ENCODE measurements at regions of chr13 and their contacts with region 1.

Region 1: DNA sequence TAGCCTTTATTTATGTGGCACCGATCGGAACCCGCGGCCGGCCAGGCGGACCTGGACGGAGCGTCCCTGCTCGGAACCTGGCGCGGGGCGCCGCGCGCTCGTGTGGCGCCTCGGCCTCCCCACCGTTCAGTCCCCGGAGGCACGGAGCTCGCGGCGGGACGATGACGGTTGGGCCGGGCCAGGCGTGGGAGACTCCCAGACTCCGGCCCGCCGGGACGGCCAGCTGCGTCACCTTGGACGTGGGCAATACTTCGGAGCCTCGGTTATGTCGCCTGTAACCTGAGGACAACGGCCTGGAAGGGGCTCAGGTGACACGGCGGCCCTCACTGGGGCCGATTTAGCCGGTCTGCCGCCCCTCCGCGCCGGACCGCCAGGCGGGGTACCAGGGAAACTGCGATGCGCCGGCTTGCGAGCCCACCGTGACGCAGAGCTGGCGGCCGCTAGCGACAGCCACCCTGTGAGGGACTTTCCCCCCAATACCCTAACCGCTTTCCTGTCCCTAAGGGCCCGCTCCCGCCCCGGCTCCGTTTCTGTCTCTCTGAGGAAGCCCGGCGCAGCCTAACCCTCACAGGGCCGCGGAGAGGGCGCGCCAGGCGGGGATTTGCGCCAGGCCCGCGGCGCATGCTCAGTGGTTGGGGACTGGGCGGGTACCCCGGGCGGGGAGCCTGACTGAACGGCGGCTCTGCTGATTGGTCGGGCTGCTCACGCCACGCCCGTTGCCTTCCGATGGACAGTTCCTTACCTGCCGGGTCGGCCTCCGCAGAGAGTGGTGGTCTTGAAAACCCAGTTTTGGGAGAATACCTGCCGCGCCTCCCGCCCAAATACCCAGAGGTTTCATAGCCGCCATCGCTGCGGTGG is 109.5 kb upstream of the DOCK9 start:
- DNase-seq: peak; percentile 83 to 95 (median 92)
- ATAC-seq: peak; percentile 85
- H3K4me3 ChIP-seq: peak overlapping the region; percentile 97
- H3K4me3 Mint-ChIP-seq: peak overlapping the region; percentile 92 to 100 (median 98)
- H3K27ac ChIP-seq: peak overlapping the region; percentile 95
- H3K27ac Mint-ChIP-seq: peak overlapping the region; percentile 96 to 99 (median 98)
- H3K4me1 ChIP-seq: peaks cover 29 to 31% of the 10 kb centered on the region in 2 donors
- H3K4me1 Mint-ChIP-seq: peaks cover 26 to 53% (median 42%) of the 10 kb centered on the region in 7 donors
- H3K27me3 ChIP-seq: no peaks in the 10 kb centered on the region
- H3K27me3 Mint-ChIP-seq: peaks cover 0 to 5% (median 3%) of the 10 kb centered on the region in 5 donors

Region 2: DNA sequence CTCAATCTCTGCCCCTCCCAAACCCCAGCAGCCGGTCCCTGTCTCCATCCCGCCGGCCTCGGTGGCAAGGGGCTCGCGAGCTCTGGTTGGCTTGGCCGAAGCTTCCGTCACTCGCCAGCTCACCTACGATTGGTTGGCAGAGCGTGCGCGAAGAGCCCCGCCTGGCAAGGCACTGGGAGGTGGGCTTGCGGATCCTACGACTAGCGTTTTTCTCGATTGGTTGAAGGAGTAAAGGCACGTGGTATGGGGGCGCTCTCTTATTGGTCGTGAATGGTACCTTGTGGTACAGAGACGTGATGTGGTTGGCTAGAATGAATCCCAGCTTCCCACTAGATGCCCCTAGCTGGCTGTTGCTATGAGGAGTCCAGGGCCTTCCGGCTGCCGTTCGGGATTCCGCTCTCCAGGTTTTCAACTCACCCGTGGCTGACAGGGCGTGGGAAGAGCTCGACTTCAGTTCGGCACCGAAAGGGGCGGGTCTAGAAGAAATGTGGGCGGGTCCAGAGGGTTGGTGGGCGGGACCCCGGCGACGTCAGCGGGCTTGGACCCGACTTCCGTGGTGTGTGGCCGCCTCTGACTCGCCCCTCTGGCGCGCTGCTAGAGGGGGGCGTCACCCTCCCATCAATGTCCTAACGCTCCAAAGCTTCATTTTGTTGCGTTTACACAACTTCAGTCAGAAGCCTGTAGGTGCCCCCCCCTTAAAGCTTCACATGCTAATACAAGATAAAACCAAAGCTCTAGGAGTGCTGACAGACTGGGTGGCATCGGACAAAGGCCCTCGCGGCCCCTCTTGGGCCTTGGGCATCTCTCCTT is 1654.2 kb before region 1 on chr13:
- CTCF ChIA-PET with region 1: no interaction called
- POLR2A ChIA-PET with region 1: no interaction called
- intact Hi-C with region 1: loop called (anchors 2 to 10 kb)
- DNase-seq: peak; percentile 97 to 99 (median 99)
- ATAC-seq: peak; percentile 85
- H3K4me3 ChIP-seq: peak overlapping the region; percentile 93
- H3K4me3 Mint-ChIP-seq: peak overlapping the region; percentile 90 to 99 (median 96)
- H3K27ac ChIP-seq: peak overlapping the region; percentile 100
- H3K27ac Mint-ChIP-seq: peak overlapping the region; percentile 98 to 100 (median 100)
- H3K4me1 ChIP-seq: peaks cover 0 to 8% of the 10 kb centered on the region in 2 donors
- H3K4me1 Mint-ChIP-seq: peaks cover 13 to 36% (median 30%) of the 10 kb centered on the region in 7 donors
- H3K27me3 ChIP-seq: no peaks in the 10 kb centered on the region
- H3K27me3 Mint-ChIP-seq: peaks cover 0 to 11% (median 7%) of the 10 kb centered on the region in 5 donors

Region 3: DNA sequence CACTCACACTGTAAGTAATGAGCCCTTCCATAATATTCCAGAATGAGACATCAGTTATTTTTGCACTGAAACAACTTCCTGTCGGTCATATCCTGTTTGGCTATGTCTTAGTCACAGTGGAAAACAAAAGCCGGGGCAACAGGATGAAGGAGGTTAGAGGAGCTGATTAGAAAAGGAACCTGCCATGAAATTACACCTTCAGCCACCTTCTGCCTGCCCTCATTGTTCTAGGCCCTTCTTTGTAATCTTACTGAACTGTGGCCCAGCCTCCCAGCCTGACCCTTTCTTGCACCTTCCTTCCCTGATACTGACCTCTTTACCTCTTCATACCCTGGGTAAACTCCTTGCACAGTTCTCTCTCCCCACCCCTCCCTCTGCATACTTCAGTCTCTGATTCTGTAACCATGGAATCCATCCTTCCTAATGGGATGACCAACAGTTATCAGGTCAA is 176.8 kb before region 1 on chr13:
- CTCF ChIA-PET with region 1: no interaction called
- POLR2A ChIA-PET with region 1: interaction called, 4 read pairs
- intact Hi-C with region 1: loop called (anchors 2 to 5 kb)
- DNase-seq: peak in 8 of 9 donors; percentile 13 to 59 (median 50)
- ATAC-seq: peak; percentile 71
- H3K4me3 ChIP-seq: no peak overlapping the region
- H3K4me3 Mint-ChIP-seq: peak overlapping the region in 9 of 10 donors; percentile 5 to 82 (median 69)
- H3K27ac ChIP-seq: no peak overlapping the region
- H3K27ac Mint-ChIP-seq: peak overlapping the region; percentile 75 to 96 (median 90)
- H3K4me1 ChIP-seq: peaks cover 9 to 10% of the 10 kb centered on the region in 2 donors
- H3K4me1 Mint-ChIP-seq: peaks cover 12 to 53% (median 47%) of the 10 kb centered on the region in 7 donors
- H3K27me3 ChIP-seq: no peaks in the 10 kb centered on the region
- H3K27me3 Mint-ChIP-seq: no peaks in the 10 kb centered on the region

Region 4: GRCh38 chr13:99057310-99057975 is 29.9 kb before region 1 on chr13:
- CTCF ChIA-PET with region 1: interaction called, 4 read pairs
- POLR2A ChIA-PET with region 1: interaction called, 77 read pairs
- intact Hi-C with region 1: no loop called
- DNase-seq: no peak
- ATAC-seq: no peak
- H3K4me3 ChIP-seq: no peak overlapping the region
- H3K4me3 Mint-ChIP-seq: peak overlapping the region in 2 of 10 donors; percentile 8 to 50
- H3K27ac ChIP-seq: no peak overlapping the region
- H3K27ac Mint-ChIP-seq: peak overlapping the region in 8 of 9 donors; percentile 7 to 96 (median 74)
- H3K4me1 ChIP-seq: peaks cover 28 to 78% of the 10 kb centered on the region in 2 donors
- H3K4me1 Mint-ChIP-seq: peaks cover 46 to 99% (median 94%) of the 10 kb centered on the region in 7 donors
- H3K27me3 ChIP-seq: no peaks in the 10 kb centered on the region
- H3K27me3 Mint-ChIP-seq: peaks cover 0 to 19% (median 0%) of the 10 kb centered on the region in 5 donors

Region 5: DNA sequence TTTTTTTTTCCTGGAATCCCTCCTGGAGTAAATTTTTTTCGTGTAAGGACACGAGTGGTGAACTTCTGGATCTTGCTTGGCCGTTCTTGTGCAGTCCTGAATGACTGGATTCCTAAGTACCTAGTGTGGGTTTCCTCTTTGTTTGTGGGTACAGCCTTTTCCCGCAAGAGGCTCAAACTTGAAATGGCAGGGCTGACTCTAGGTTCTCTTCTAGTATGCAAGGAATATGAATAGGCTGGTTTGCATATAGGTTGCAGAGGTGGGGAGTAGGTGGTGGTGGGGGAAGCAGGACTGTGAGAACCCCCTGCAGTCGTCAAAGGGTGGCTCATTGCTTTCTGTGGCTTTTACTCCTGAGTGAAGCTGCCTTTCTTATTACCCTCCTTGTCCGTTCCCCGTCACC is 126.9 kb after region 1 on chr13:
- CTCF ChIA-PET with region 1: no interaction called
- POLR2A ChIA-PET with region 1: interaction called, 4 read pairs
- intact Hi-C with region 1: loop called (anchors 2 to 5 kb)
- DNase-seq: peak in 4 of 9 donors; percentile 34 to 53 (median 46)
- ATAC-seq: no peak
- H3K4me3 ChIP-seq: peak overlapping the region; percentile 53
- H3K4me3 Mint-ChIP-seq: peak overlapping the region; percentile 69 to 95 (median 92)
- H3K27ac ChIP-seq: peak overlapping the region; percentile 85
- H3K27ac Mint-ChIP-seq: peak overlapping the region; percentile 94 to 100 (median 99)
- H3K4me1 ChIP-seq: peaks cover 46 to 67% of the 10 kb centered on the region in 2 donors
- H3K4me1 Mint-ChIP-seq: peaks cover 49 to 93% (median 79%) of the 10 kb centered on the region in 7 donors
- H3K27me3 ChIP-seq: no peaks in the 10 kb centered on the region
- H3K27me3 Mint-ChIP-seq: no peaks in the 10 kb centered on the region

Region 6: GRCh38 chr13:99425485-99426341 is 338.4 kb after region 1 on chr13:
- CTCF ChIA-PET with region 1: no interaction called
- POLR2A ChIA-PET with region 1: no interaction called
- intact Hi-C with region 1: loop called (anchors 5 kb)
- DNase-seq: peak in 8 of 9 donors; percentile 41 to 71 (median 62)
- ATAC-seq: peak; percentile 68
- H3K4me3 ChIP-seq: peak overlapping the region; percentile 52
- H3K4me3 Mint-ChIP-seq: peak overlapping the region; percentile 69 to 85 (median 77)
- H3K27ac ChIP-seq: peak overlapping the region; percentile 83
- H3K27ac Mint-ChIP-seq: peak overlapping the region in 8 of 9 donors; percentile 91 to 99 (median 96)
- H3K4me1 ChIP-seq: peaks cover 25 to 59% of the 10 kb centered on the region in 2 donors
- H3K4me1 Mint-ChIP-seq: peaks cover 39 to 74% (median 64%) of the 10 kb centered on the region in 7 donors
- H3K27me3 ChIP-seq: no peaks in the 10 kb centered on the region
- H3K27me3 Mint-ChIP-seq: peaks cover 0 to 4% (median 0%) of the 10 kb centered on the region in 5 donors

Region 7: GRCh38 chr13:100588331-100589177 is 1501.2 kb after region 1 on chr13 and contains the start of gene GGACT:
- CTCF ChIA-PET with region 1: no interaction called
- POLR2A ChIA-PET with region 1: no interaction called
- intact Hi-C with region 1: loop called in 1 of 2 experiments (anchors 10 kb)
- DNase-seq: peak; percentile 75 to 90 (median 87)
- ATAC-seq: peak; percentile 97
- H3K4me3 ChIP-seq: peak within 1 kb of the TSS; percentile 78
- H3K4me3 Mint-ChIP-seq: peak within 1 kb of the TSS; percentile 82 to 92 (median 85)
- H3K27ac ChIP-seq: peak within 1 kb of the TSS; percentile 79
- H3K27ac Mint-ChIP-seq: peak within 1 kb of the TSS; percentile 81 to 95 (median 92)
- H3K4me1 ChIP-seq: peaks cover 7 to 42% of the 10 kb centered on the region in 2 donors
- H3K4me1 Mint-ChIP-seq: peaks cover 28 to 60% (median 50%) of the 10 kb centered on the region in 7 donors
- H3K27me3 ChIP-seq: no peaks in the 10 kb centered on the region
- H3K27me3 Mint-ChIP-seq: no peaks in the 10 kb centered on the region
- total RNA-seq, gene GGACT: 5.3 to 8.7 (median 7.4) TPM